ENCODE measurements at regions of chr20 and their contacts with region 1.

Region 1: DNA sequence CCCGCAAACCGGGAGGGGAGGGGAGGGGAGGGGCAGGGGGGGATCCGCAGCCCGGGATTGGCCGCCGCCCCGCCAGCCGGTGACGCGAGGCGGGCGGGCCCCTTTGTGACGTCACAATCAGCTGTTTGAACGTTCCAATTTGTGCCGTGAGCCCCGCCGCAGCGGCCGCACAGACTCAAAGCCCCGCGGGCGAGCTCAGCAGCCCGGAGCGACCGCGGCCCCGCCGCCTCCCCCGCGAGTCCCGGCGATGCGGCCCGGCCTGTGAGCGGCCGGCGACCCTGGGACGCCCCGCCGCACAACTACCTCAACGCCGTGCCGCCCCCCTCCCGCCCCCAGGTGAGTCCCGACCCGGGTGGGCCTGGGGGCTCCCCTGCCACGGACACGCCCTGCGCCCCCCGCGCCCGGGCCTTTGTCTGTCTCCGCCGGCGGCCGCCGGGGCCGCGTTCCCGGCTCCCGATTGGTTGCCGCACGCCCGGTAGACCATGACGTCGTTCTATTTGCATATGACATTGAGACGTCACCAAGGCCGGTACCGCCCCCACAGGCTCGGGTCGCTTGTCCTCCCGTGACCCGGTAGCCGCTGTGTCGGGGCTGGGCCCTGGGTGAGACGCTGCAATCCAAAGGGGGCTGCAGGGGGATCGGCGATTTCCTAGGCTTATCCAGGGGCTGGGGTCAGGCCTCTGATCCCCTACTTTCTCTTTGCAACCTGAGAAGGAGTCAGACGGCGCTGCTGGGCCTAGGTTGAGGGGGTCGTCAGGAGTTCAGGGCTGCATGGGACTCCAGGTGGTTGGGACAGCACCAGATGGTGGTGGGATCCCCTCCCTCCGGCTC is at the start of gene TP53INP2:
- DNase-seq: peak; percentile 96
- H3K4me3 ChIP-seq: peak within 1 kb of the TSS; percentile 84 to 92
- H3K27ac ChIP-seq: peak within 1 kb of the TSS; percentile 86 to 94
- H3K4me1 ChIP-seq: peaks cover 8 to 21% of the 10 kb centered on the region in 2 experiments; a peak in 3 of 4 replicates
- H3K27me3 ChIP-seq: no peaks in the 10 kb centered on the region
- CTCF ChIP-seq: no peak
- EP300 ChIP-seq: no peak
- RAD21 ChIP-seq: no peak
- polyA plus RNA-seq, gene TP53INP2: 4.9 and 6.4 TPM in 2 replicates

Region 2: GRCh38 chr20:34558320-34559218 is 145.8 kb before region 1 on chr20 and contains the start of gene MAP1LC3A:
- CTCF ChIA-PET with region 1: interaction called, 9 read pairs
- POLR2A ChIA-PET with region 1: interaction called, 14 read pairs
- DNase-seq: peak; percentile 99
- H3K4me3 ChIP-seq: peak within 1 kb of the TSS; percentile 73 to 77
- H3K27ac ChIP-seq: peak within 1 kb of the TSS; percentile 45 to 61; a peak in 2 of 4 replicates
- H3K4me1 ChIP-seq: peaks cover 0 to 9% of the 10 kb centered on the region in 2 experiments; a peak in 1 of 4 replicates
- H3K27me3 ChIP-seq: no peaks in the 10 kb centered on the region
- CTCF ChIP-seq: no peak
- EP300 ChIP-seq: no peak
- RAD21 ChIP-seq: no peak
- polyA plus RNA-seq, gene MAP1LC3A: 17.2 and 24.9 TPM in 2 replicates

Measured in SK-N-SH (cell line).